Common myeloid progenitor, CD34-positive (primary cell): ENCODE measurements at regions of chr11 and their contacts with region 1.

Region 1: GRCh38 chr11:119334174-119334930 is at the start of gene RNF26:
- DNase-seq: peak; percentile 98
- H3K4me3 ChIP-seq: peak within 1 kb of the TSS; percentile 53 to 96 (median 93)
- H3K27ac ChIP-seq: peak within 1 kb of the TSS; percentile 79 to 90
- H3K4me1 ChIP-seq: peaks cover 0 to 29% (median 21%) of the 10 kb centered on the region in 4 experiments
- H3K27me3 ChIP-seq: peaks cover 0 to 10% (median 10%) of the 10 kb centered on the region in 5 experiments

Region 2: DNA sequence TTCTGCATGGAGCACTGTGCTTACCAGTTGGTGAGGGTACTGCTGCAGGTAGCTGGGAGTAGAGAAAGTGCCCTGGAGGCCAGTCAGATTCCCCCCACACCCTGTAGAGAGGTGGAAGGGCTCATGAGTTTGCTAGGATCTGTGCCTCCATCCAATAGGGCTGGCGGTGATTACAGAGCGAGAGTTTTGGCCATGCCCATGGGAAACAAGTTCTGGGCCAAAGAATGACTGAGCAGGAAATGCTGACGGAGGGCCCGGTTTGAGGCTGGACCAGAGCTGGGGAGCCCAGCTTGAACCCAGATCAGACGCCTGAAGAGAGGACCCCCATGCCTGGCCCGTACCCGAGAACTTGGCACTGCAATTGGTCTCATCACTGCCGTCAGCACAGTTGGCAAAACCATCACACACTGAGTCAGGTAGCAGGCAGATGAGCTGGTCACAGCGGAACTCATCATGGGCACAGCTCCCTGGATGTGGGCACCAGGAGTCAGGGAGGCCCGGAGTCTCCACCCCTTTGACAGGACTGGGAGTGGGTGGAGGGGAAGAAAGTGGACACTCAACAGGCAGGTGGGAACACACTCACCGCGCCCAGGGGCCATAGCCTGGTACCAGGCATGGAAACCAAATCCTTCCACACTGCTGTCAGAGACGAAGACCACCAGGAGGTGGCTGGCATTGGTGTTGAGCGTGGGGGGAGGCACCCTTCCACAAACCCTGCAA is 10.1 kb after region 1 on chr11:
- CTCF ChIA-PET with region 1: no interaction called
- POLR2A ChIA-PET with region 1: no interaction called
- DNase-seq: no peak
- H3K4me3 ChIP-seq: no peak overlapping the region
- H3K27ac ChIP-seq: no peak overlapping the region
- H3K4me1 ChIP-seq: peaks cover 0 to 22% (median 21%) of the 10 kb centered on the region in 4 experiments
- H3K27me3 ChIP-seq: peaks cover 0 to 51% (median 18%) of the 10 kb centered on the region in 5 experiments

Region 3: DNA sequence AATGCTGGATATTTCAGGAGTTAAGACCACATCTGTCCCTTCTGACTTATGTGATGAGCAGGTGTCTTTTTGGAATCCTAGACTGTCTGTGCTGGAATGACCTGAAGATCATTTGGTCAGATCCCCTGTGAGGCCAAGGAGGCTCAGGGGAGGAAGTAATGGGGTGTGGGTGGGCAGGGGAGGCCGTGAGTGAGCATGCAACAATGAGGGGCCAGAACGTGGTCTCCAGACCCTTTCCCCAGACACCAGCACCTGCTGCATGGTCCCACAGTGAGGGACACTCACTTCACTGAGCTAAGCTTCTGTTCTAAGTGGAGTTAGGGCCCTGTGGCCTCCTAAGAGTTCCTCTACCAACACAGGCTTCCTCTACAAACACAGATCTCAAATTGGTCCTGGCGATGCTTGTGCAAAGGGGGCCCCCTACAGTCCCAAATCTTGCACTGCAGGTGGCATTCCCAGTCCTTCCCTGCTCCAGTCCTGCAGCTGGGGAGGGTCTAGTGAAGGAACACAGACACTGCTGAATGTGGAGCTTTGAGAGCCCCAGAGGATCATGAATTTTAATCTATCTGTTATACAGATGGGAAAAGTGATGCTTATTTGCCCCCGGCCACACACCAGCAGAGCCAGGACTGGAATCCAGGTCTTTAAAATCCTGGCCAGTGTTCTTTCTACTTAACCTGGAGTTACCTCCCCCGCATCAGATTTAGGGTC is 39.7 kb after region 1 on chr11:
- CTCF ChIA-PET with region 1: interaction called, 62 read pairs
- POLR2A ChIA-PET with region 1: no interaction called
- DNase-seq: peak; percentile 44 to 61 (median 50)
- H3K4me3 ChIP-seq: no peak overlapping the region
- H3K27ac ChIP-seq: no peak overlapping the region
- H3K4me1 ChIP-seq: peaks cover 0 to 3% (median 0%) of the 10 kb centered on the region in 4 experiments
- H3K27me3 ChIP-seq: peaks cover 0 to 3% (median 0%) of the 10 kb centered on the region in 5 experiments

Region 4: GRCh38 chr11:119474682-119475596 is 140.6 kb after region 1 on chr11:
- CTCF ChIA-PET with region 1: interaction called, 10 read pairs
- POLR2A ChIA-PET with region 1: no interaction called
- DNase-seq: peak; percentile 52 to 82 (median 70)
- H3K4me3 ChIP-seq: no peak overlapping the region
- H3K27ac ChIP-seq: no peak overlapping the region
- H3K4me1 ChIP-seq: no peaks in the 10 kb centered on the region
- H3K27me3 ChIP-seq: peaks cover 0 to 6% (median 2%) of the 10 kb centered on the region in 5 experiments